IMR-90 (cell line): ENCODE measurements at regions of chr13 and their contacts with region 1.

Region 1: GRCh38 chr13:21176220-21176982 is at the starts of genes MRPL57 and SKA3:
- DNase-seq: peak; percentile 91
- ATAC-seq: peak; percentile 91
- H3K4me3 ChIP-seq: peak within 1 kb of the TSS; percentile 87
- H3K27ac ChIP-seq: peak within 1 kb of the TSS; percentile 87
- H3K4me1 ChIP-seq: 0 out of 2 replicates have a peak, but pooled peaks cover 2% of the 10 kb centered on the region
- H3K27me3 ChIP-seq: no peaks in the 10 kb centered on the region
- CTCF ChIP-seq: no peak
- POLR2A ChIP-seq: peak; percentile 85
- RAD21 ChIP-seq: 0 out of 2 replicates have a peak, but pooled peaks have one; percentile 18
- total RNA-seq, gene MRPL57: 5.3 and 7.0 TPM in 2 replicates
- total RNA-seq, gene SKA3: 15.6 and 24.4 TPM in 2 replicates

Region 2: GRCh38 chr13:20713751-20714150 is 462.6 kb before region 1 on chr13:
- CTCF ChIA-PET with region 1: no interaction called
- POLR2A ChIA-PET with region 1: interaction called, 10 read pairs
- dilution Hi-C with region 1: no loop called
- in situ Hi-C with region 1: no loop called
- intact Hi-C with region 1: no loop called
- DNase-seq: peak; percentile 39
- ATAC-seq: no peak
- H3K4me3 ChIP-seq: no peak overlapping the region
- H3K27ac ChIP-seq: no peak overlapping the region
- H3K4me1 ChIP-seq: peaks cover 9% of the 10 kb centered on the region
- H3K27me3 ChIP-seq: peaks cover 1% of the 10 kb centered on the region; the same call in 1 of the 2 replicates
- CTCF ChIP-seq: no peak
- POLR2A ChIP-seq: no peak
- RAD21 ChIP-seq: no peak

Region 3: GRCh38 chr13:21240586-21240985 is 64.2 kb after region 1 on chr13:
- CTCF ChIA-PET with region 1: interaction called, 13 read pairs
- POLR2A ChIA-PET with region 1: no interaction called
- dilution Hi-C with region 1: no loop called
- in situ Hi-C with region 1: no loop called
- intact Hi-C with region 1: no loop called
- DNase-seq: peak; percentile 58
- ATAC-seq: peak; percentile 79
- H3K4me3 ChIP-seq: no peak overlapping the region
- H3K27ac ChIP-seq: no peak overlapping the region
- H3K4me1 ChIP-seq: no peaks in the 10 kb centered on the region
- H3K27me3 ChIP-seq: peaks cover 7% of the 10 kb centered on the region
- CTCF ChIP-seq: no peak
- POLR2A ChIP-seq: no peak
- RAD21 ChIP-seq: no peak